CD14-positive monocyte (primary cell): ENCODE measurements at regions of chr3 and their contacts with region 1.

Region 1: DNA sequence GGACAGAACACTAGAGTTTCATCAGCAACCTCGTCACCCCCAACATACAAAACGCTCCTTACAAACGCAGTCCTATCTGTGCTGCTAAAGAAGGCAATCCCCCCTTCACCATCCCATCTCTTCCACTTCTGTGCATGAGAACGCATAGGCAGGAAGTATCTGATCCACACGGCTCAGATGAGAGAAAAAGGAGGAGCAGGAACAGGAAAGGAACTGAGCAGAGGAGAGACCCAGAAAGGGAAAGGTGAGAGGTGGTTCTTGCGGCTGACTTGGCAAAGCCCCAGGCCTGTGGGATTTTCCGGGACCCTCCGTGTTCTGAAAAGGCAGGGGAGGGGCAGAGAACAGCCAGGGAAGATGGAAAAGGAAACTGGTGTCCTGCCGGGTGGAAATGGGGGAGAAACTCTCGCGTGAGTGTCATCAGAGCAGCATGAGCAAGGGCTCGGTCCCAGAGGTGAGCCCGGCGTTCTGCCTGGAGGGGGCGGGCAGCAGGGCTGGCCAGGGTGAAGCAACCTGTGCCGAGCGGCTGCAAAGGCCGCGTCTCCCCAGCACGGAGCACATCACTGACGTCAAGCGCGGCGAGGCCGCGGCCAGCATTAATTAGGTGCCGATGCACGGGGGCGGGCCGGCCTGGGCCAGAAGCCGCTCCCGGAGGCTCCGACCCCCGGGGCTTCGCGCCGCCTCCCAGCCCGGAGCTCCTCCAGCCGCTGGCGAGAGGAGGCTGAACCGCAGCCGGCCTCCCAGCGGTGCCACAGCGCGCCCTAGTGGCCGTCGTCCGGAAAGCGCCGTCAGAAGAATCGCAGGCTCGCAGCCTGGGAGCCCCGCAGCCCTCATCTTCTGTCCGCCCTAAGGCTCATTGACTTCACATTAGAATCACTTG is 35.8 kb downstream of the CPN2 start:
- DNase-seq: peak; percentile 60 to 68 (median 67)
- H3K4me3 ChIP-seq: peak overlapping the region; percentile 17 to 71 (median 50)
- H3K4me3 Mint-ChIP-seq: peak overlapping the region; percentile 81 to 93
- H3K27ac ChIP-seq: no peak overlapping the region
- H3K27ac Mint-ChIP-seq: peak overlapping the region in 1 of 7 donors; percentile 10
- H3K4me1 ChIP-seq: peaks cover 6 to 14% of the 10 kb centered on the region in 2 donors
- H3K4me1 Mint-ChIP-seq: peaks cover 8% of the 10 kb centered on the region
- H3K27me3 ChIP-seq: peaks cover 30 to 61% of the 10 kb centered on the region in 2 donors
- H3K27me3 Mint-ChIP-seq: peaks cover 54 to 80% (median 56%) of the 10 kb centered on the region in 3 donors
- CTCF ChIP-seq: peak; percentile 97

Region 2: DNA sequence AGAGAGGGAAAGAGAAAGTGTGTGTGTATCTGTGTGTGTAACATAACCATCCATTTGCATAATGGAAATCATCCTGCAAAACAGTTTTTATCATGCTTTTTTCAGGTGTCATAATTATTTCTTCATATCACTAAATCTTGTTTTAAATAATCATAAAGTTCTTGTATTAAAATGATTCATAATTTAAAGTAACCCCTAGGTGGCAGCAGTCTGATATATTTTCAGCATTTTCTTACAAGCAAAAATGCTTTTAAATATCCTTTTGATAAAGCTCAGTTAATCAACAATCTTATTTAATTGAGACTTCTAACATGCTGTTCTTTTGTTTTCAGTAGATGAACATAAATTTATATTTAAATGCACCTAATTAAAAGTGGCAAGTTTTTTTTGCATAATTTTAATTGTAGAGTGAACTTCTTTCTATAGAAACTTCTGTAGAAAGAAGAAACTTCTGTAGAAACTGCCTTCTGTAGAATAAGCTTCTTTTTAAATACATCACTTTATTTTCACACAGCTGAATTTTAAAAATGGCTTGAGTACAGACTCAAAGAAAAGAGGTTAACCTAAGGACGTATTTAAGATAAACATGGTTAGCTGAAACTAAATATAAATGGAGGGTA is 649.8 kb before region 1 on chr3:
- intact Hi-C with region 1: loop called (anchors 2 to 10 kb)
- DNase-seq: peak in 2 of 3 donors; percentile 4 to 14
- H3K4me3 ChIP-seq: no peak overlapping the region
- H3K4me3 Mint-ChIP-seq: no peak overlapping the region
- H3K27ac ChIP-seq: no peak overlapping the region
- H3K27ac Mint-ChIP-seq: no peak overlapping the region
- H3K4me1 ChIP-seq: no peaks in the 10 kb centered on the region
- H3K4me1 Mint-ChIP-seq: no peaks in the 10 kb centered on the region
- H3K27me3 ChIP-seq: no peaks in the 10 kb centered on the region
- H3K27me3 Mint-ChIP-seq: no peaks in the 10 kb centered on the region
- CTCF ChIP-seq: peak; percentile 71

Region 3: DNA sequence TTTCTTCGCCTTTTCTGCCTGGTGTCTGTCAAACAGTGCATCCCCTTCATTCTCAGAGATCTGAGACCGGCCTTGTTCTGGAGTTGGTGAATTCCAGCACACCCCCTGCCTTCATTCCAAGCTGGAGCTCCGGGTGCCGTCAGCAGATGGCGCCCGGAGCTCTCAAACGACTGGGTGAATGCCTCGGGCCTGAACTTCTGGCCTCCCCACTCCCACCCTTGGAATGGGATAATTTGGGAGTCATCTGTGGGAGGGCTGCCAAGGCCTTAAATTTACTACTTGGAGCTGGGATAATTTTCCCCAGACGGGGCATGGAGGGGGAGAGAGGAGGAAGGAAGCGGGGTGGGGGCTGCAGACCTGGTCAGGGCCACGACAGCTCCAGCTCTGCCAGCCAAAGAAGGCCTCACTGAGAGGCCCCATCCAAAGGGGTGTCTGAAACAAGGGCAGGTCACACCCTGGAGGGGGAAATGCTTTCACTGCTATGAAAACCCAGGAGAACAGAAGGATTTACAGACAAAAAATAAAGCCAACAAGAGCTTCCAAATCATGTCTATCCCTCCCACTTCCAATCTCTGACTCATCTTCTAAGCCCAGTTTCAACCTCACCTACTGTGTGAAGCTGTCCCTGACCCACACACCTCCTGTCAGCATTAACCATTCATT is 534.4 kb before region 1 on chr3:
- intact Hi-C with region 1: loop called (anchors 2 kb)
- DNase-seq: peak; percentile 23 to 38 (median 30)
- H3K4me3 ChIP-seq: no peak overlapping the region
- H3K4me3 Mint-ChIP-seq: peak overlapping the region in 1 of 2 donors; percentile 67
- H3K27ac ChIP-seq: no peak overlapping the region
- H3K27ac Mint-ChIP-seq: peak overlapping the region in 1 of 7 donors; percentile 50
- H3K4me1 ChIP-seq: no peaks in the 10 kb centered on the region
- H3K4me1 Mint-ChIP-seq: no peaks in the 10 kb centered on the region
- H3K27me3 ChIP-seq: peaks cover 14 to 35% of the 10 kb centered on the region in 2 donors
- H3K27me3 Mint-ChIP-seq: peaks cover 27 to 57% (median 28%) of the 10 kb centered on the region in 3 donors
- CTCF ChIP-seq: peak; percentile 74

Region 4: GRCh38 chr3:194381460-194381875 is 66.1 kb after region 1 on chr3:
- intact Hi-C with region 1: no loop called
- DNase-seq: no peak
- H3K4me3 ChIP-seq: no peak overlapping the region
- H3K4me3 Mint-ChIP-seq: no peak overlapping the region
- H3K27ac ChIP-seq: no peak overlapping the region
- H3K27ac Mint-ChIP-seq: no peak overlapping the region
- H3K4me1 ChIP-seq: no peaks in the 10 kb centered on the region
- H3K4me1 Mint-ChIP-seq: no peaks in the 10 kb centered on the region
- H3K27me3 ChIP-seq: no peaks in the 10 kb centered on the region
- H3K27me3 Mint-ChIP-seq: peaks cover 14 to 29% (median 20%) of the 10 kb centered on the region in 3 donors
- CTCF ChIP-seq: no peak